ENCODE measurements at regions of chr2 and their contacts with region 1.

Region 1: GRCh38 chr2:62456721-62457539 is 49.1 kb downstream of the TMEM17 start:
- DNase-seq: peak; percentile 44 to 80 (median 66)
- ATAC-seq: peak; percentile 92
- H3K4me3 ChIP-seq: peak overlapping the region; percentile 44 to 50
- H3K4me3 Mint-ChIP-seq: peak overlapping the region; percentile 63
- H3K27ac ChIP-seq: no peak overlapping the region
- H3K27ac Mint-ChIP-seq: no peak overlapping the region
- H3K4me1 ChIP-seq: no peaks in the 10 kb centered on the region
- H3K4me1 Mint-ChIP-seq: no peaks in the 10 kb centered on the region
- H3K27me3 ChIP-seq: peaks cover 0 to 3% of the 10 kb centered on the region in 2 experiments
- H3K27me3 Mint-ChIP-seq: peaks cover 4% of the 10 kb centered on the region
- CTCF ChIP-seq: peak; percentile 87

Region 2: GRCh38 chr2:61405813-61406212 is 1051.1 kb before region 1 on chr2:
- CTCF ChIA-PET with region 1: no interaction called
- POLR2A ChIA-PET with region 1: no interaction called
- intact Hi-C with region 1: loop called in 1 of 2 experiments (anchors 5 kb)
- DNase-seq: no peak
- ATAC-seq: no peak
- H3K4me3 ChIP-seq: no peak overlapping the region
- H3K4me3 Mint-ChIP-seq: no peak overlapping the region
- H3K27ac ChIP-seq: no peak overlapping the region
- H3K27ac Mint-ChIP-seq: no peak overlapping the region
- H3K4me1 ChIP-seq: no peaks in the 10 kb centered on the region
- H3K4me1 Mint-ChIP-seq: peaks cover 14% of the 10 kb centered on the region
- H3K27me3 ChIP-seq: no peaks in the 10 kb centered on the region
- H3K27me3 Mint-ChIP-seq: no peaks in the 10 kb centered on the region
- CTCF ChIP-seq: no peak

Region 3: DNA sequence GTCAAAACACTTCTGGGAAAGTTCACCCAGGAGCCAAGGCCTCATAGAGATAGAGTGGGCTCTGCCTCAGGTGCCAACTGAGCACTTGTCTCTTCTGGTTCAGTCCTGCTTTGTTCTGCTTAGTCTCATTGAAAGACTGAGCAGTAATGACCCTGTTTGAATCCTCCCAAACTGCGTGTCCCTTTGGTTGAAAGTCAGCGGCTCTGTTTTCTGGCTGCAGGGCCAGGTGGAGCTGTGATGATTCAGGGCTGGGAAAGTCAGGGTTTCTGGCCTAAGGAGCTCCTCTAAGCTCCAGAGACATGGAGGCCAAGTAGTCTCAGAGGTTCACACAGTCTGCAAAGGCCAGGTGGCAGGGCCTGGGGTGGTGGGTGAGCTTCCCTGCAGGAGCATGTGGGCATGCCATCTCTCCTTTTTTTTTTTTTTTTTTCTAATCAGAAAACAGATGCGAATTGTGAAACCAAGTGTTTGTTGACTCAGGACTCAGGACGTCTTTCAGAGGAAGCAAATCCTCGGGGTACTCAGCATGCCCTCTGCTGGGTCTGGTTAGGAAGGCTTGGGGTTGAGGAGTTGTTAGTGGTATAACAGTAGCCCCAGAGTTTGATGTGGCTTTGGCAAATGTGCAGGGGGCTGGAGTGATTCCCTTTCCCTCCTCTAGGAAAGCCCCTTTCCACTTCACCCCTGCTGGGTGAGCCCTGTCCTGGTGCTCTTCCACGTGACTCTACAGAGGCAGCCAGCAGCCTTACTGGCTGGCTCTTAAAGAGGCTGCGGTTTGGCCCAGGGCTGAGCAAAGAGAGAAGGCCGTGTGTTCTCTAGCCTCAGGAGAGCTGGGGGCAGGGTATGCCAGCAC is 10.8 kb after region 1 on chr2:
- CTCF ChIA-PET with region 1: interaction called, 36 read pairs
- POLR2A ChIA-PET with region 1: no interaction called
- intact Hi-C with region 1: no loop called
- DNase-seq: no peak
- ATAC-seq: no peak
- H3K4me3 ChIP-seq: no peak overlapping the region
- H3K4me3 Mint-ChIP-seq: no peak overlapping the region
- H3K27ac ChIP-seq: no peak overlapping the region
- H3K27ac Mint-ChIP-seq: no peak overlapping the region
- H3K4me1 ChIP-seq: no peaks in the 10 kb centered on the region
- H3K4me1 Mint-ChIP-seq: no peaks in the 10 kb centered on the region
- H3K27me3 ChIP-seq: no peaks in the 10 kb centered on the region
- H3K27me3 Mint-ChIP-seq: no peaks in the 10 kb centered on the region
- CTCF ChIP-seq: no peak

Region 4: GRCh38 chr2:62765619-62766376 is 308.9 kb after region 1 on chr2:
- CTCF ChIA-PET with region 1: interaction called, 235 read pairs
- POLR2A ChIA-PET with region 1: no interaction called
- intact Hi-C with region 1: no loop called
- DNase-seq: no peak
- ATAC-seq: no peak
- H3K4me3 ChIP-seq: no peak overlapping the region
- H3K4me3 Mint-ChIP-seq: no peak overlapping the region
- H3K27ac ChIP-seq: no peak overlapping the region
- H3K27ac Mint-ChIP-seq: no peak overlapping the region
- H3K4me1 ChIP-seq: no peaks in the 10 kb centered on the region
- H3K4me1 Mint-ChIP-seq: no peaks in the 10 kb centered on the region
- H3K27me3 ChIP-seq: no peaks in the 10 kb centered on the region
- H3K27me3 Mint-ChIP-seq: no peaks in the 10 kb centered on the region
- CTCF ChIP-seq: no peak

Region 5: GRCh38 chr2:62787386-62787785 is 330.5 kb after region 1 on chr2:
- CTCF ChIA-PET with region 1: interaction called, 15 read pairs
- POLR2A ChIA-PET with region 1: interaction called, 3 read pairs
- intact Hi-C with region 1: no loop called
- DNase-seq: peak in 2 of 9 experiments; percentile 15 to 17
- ATAC-seq: no peak
- H3K4me3 ChIP-seq: no peak overlapping the region
- H3K4me3 Mint-ChIP-seq: no peak overlapping the region
- H3K27ac ChIP-seq: no peak overlapping the region
- H3K27ac Mint-ChIP-seq: no peak overlapping the region
- H3K4me1 ChIP-seq: no peaks in the 10 kb centered on the region
- H3K4me1 Mint-ChIP-seq: peaks cover 4% of the 10 kb centered on the region
- H3K27me3 ChIP-seq: no peaks in the 10 kb centered on the region
- H3K27me3 Mint-ChIP-seq: no peaks in the 10 kb centered on the region
- CTCF ChIP-seq: no peak

Region 6: GRCh38 chr2:63488118-63488713 is 1031.3 kb after region 1 on chr2:
- CTCF ChIA-PET with region 1: interaction called, 13 read pairs
- POLR2A ChIA-PET with region 1: no interaction called
- intact Hi-C with region 1: loop called in 1 of 2 experiments (anchors 5 kb)
- DNase-seq: peak in 2 of 9 experiments; percentile 9 to 13
- ATAC-seq: no peak
- H3K4me3 ChIP-seq: no peak overlapping the region
- H3K4me3 Mint-ChIP-seq: no peak overlapping the region
- H3K27ac ChIP-seq: no peak overlapping the region
- H3K27ac Mint-ChIP-seq: no peak overlapping the region
- H3K4me1 ChIP-seq: no peaks in the 10 kb centered on the region
- H3K4me1 Mint-ChIP-seq: peaks cover 2% of the 10 kb centered on the region
- H3K27me3 ChIP-seq: no peaks in the 10 kb centered on the region
- H3K27me3 Mint-ChIP-seq: no peaks in the 10 kb centered on the region
- CTCF ChIP-seq: peak; percentile 32

Region 7: DNA sequence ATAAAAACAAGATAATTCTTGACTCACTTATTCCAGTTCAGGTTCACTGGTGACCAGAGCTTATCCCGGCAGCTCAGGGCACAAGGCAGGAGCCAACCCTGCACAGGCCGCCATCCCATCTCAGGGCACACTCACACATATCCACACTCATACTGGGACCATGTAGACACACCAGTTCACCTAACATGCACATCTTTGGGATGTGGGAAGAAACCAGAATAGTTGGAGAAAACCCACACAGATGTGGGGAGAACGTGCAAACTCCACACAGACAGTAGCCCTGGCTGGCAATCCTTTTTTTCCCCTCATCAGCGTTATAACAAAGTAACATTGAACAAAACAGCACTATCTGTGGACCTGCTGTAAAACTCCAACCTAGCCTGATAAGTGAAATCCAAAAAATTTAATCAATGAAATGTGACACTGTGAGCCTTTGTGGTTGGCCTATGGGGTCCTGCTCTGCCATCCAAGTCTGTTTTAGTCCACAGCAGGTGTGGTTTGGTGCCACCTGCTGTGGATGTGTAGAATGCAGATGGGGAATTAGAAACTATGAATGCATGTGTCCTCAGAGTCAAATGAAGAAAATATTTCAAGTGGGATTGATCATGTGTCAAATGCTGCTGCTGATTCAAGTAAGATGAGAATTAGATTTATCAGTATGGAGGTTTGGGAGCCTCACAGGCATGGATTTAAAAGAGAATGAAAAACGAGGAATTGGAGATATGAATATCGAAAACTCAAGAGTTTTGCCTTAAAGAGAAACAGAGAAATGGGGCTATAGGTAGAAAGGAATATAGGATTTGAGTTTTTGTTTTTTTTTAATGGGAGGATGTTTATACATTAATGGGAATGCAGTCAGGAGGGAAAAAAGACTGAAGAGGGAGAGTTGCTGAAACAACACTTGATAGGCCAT is 1431.8 kb after region 1 on chr2:
- CTCF ChIA-PET with region 1: no interaction called
- POLR2A ChIA-PET with region 1: no interaction called
- intact Hi-C with region 1: loop called in 1 of 2 experiments (anchors 2 kb)
- DNase-seq: peak in 7 of 9 experiments; percentile 3 to 63 (median 35)
- ATAC-seq: peak; percentile 77
- H3K4me3 ChIP-seq: no peak overlapping the region
- H3K4me3 Mint-ChIP-seq: no peak overlapping the region
- H3K27ac ChIP-seq: no peak overlapping the region
- H3K27ac Mint-ChIP-seq: peak overlapping the region; percentile 30
- H3K4me1 ChIP-seq: no peaks in the 10 kb centered on the region
- H3K4me1 Mint-ChIP-seq: peaks cover 4% of the 10 kb centered on the region
- H3K27me3 ChIP-seq: no peaks in the 10 kb centered on the region
- H3K27me3 Mint-ChIP-seq: no peaks in the 10 kb centered on the region
- CTCF ChIP-seq: peak; percentile 71

Measured in CD8-positive, alpha-beta T cell (primary cell).